Stomach (tissue), 19 donors: ENCODE measurements at regions of chr4 and their contacts with region 1.

Region 1: GRCh38 chr4:173415885-173416653 is 17.2 kb upstream of the SCRG1 start:
- DNase-seq: peak in 1 of 2 donors; percentile 39
- H3K4me3 ChIP-seq: no peak overlapping the region
- H3K27ac ChIP-seq: peak overlapping the region in 4 of 5 donors; percentile 36 to 69 (median 64)
- H3K4me1 ChIP-seq: peaks cover 0 to 64% (median 5%) of the 10 kb centered on the region in 4 donors
- H3K27me3 ChIP-seq: no peaks in the 10 kb centered on the region
- CTCF ChIP-seq: no peak
- EP300 ChIP-seq: no peak
- POLR2A ChIP-seq: no peak

Region 2: GRCh38 chr4:173013232-173013930 is 402.7 kb before region 1 on chr4:
- intact Hi-C with region 1: loop called (anchors 10 kb)
- DNase-seq: peak; percentile 49 to 75
- H3K4me3 ChIP-seq: no peak overlapping the region
- H3K27ac ChIP-seq: peak overlapping the region in 1 of 5 donors; percentile 40
- H3K4me1 ChIP-seq: peaks cover 0 to 21% (median 14%) of the 10 kb centered on the region in 4 donors
- H3K27me3 ChIP-seq: no peaks in the 10 kb centered on the region
- CTCF ChIP-seq: peak in 5 of 7 experiments; percentile 67 to 91 (median 77)
- EP300 ChIP-seq: no peak
- POLR2A ChIP-seq: no peak

Region 3: DNA sequence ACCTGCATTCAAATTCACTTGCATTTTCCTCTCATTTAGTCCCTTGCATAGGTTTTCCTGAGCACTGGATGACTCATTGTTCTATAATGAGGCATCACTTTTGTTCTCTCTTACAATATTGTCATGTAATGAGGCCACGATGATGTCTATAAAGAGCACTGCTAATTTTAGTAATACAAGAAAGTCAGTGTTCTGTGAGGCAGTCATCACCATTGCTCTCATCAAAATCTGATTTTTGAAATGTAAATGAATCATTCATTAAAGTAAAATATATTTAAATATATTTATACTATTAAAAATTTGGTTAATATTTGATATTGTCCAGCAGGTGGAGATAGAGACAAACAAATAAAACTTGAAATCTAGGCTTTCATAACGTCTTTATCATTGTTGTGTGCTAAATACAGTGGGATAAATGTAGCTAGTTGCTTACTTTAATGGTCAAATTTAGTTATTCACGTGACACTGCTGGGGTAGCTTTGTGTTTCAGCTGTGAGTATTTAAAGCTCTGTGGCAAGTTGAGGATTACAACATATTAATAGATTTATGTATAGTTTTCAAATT is 97.3 kb before region 1 on chr4:
- intact Hi-C with region 1: loop called (anchors 5 kb)
- DNase-seq: peak in 1 of 2 donors; percentile 53
- H3K4me3 ChIP-seq: no peak overlapping the region
- H3K27ac ChIP-seq: no peak overlapping the region
- H3K4me1 ChIP-seq: peaks cover 0 to 11% (median 2%) of the 10 kb centered on the region in 4 donors
- H3K27me3 ChIP-seq: no peaks in the 10 kb centered on the region
- CTCF ChIP-seq: peak in 3 of 7 experiments; percentile 35 to 47 (median 45)
- EP300 ChIP-seq: no peak
- POLR2A ChIP-seq: no peak

Region 4: DNA sequence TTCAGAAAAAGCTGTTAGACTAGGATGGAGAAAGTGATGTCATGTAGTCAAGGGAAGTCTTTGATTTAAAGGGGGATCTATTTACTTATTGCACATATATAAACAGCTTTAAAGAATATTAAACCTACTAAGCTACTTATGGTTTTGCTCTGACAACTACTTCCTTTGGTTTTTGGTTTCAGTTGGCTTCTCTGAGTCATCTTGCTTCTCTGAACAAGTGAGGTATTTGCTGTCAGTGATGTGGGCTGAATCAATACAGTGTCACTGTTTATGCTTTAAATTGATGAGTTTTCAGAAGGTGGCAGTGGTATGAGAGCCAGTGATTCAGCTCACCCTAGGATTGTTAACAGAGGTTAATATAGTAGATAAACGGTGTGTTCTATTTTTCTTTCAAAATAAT is 942.8 kb after region 1 on chr4:
- intact Hi-C with region 1: no loop called
- DNase-seq: no peak
- H3K4me3 ChIP-seq: no peak overlapping the region
- H3K27ac ChIP-seq: no peak overlapping the region
- H3K4me1 ChIP-seq: no peaks in the 10 kb centered on the region
- H3K27me3 ChIP-seq: no peaks in the 10 kb centered on the region
- CTCF ChIP-seq: no peak
- EP300 ChIP-seq: no peak
- POLR2A ChIP-seq: no peak